SK-N-SH (cell line): ENCODE measurements at regions of chr3 and their contacts with region 1.

Region 1: DNA sequence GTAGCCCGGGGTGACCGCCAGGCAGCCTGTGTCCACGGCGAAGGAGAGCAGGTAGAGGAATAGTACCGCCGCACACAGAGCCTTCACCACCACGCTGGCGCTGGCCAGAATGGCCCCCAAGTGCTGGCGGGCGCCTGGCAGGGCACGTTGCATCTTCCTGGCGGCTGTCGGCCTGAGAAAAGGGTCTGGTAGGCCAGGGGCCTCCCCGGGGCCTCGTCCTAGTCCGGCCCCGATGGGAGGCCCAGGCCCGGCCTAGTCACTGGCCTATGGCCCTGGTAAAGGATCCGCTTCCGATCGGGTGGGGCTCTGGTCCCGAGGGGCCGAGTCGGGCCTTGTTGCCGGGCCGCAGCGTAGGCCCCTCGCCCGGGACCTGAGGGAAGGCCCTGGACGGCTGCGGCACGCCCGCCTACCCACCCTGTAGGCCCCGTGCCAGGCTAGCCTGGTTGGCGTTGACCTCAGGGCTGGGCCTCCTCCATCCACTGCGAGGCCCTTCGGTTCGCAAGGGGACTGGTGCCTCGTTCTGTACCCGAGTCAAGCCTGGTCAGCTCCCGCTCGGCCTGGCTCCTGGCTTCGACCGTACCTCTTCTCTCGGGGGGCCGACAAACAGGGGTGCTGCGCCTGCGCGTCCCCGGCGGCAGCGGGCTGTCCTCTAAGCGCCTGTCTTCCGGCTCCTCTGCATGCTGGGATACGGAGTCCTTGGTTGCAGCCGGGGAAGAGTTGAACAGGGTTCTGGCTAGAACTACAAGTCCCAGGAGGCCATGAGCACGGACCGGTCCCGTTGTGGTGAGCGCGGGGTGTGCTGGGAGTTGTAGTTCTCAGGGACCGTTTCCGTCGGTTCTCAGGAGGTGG is at the start of gene TMEM115:
- DNase-seq: peak; percentile 98
- H3K4me3 ChIP-seq: peak within 1 kb of the TSS; percentile 77 to 95
- H3K27ac ChIP-seq: peak within 1 kb of the TSS; percentile 60 to 84; a peak in 3 of 4 replicates
- H3K4me1 ChIP-seq: peaks cover 8 to 49% of the 10 kb centered on the region in 2 experiments; a peak in 2 of 4 replicates
- H3K27me3 ChIP-seq: no peaks in the 10 kb centered on the region
- CTCF ChIP-seq: no peak
- EP300 ChIP-seq: no peak; a peak in 1 of 4 replicates
- RAD21 ChIP-seq: no peak
- polyA plus RNA-seq, gene TMEM115: 47.8 and 49.2 TPM in 2 replicates

Region 2: DNA sequence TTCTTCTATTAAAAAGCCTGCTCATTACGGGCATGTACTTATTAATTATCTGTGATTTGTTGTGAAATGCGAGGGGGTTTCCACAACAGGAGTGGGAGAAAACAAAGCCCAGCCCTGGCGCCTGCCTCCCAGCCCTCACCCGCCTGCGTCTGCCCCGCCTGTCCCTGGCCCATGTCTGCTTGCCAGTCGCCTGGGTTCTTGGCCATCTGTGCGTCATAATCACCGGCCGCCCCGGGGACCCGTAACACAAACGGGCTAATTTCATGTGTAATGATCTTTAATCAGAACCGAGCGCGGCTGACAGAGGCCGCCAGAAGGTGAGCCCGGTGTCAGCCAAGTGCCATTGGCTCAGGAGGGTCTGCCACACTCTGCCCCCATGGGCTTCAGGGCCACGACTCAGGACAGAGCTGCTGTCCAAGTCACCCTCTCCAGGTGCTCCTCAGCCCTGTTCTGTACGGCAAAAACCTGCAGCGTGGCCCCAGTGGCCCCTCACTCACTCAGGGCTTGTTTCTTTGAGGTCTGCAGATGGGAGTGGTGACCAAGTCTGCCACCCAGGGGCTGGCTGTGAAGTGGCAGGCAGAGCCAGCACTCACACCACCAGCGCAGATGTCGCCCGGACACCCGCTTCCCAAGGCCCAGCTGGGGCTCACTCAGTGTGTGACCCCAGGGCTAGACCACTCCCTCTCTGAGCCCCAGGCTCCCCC is 29.0 kb after region 1 on chr3:
- CTCF ChIA-PET with region 1: interaction called, 33 read pairs
- POLR2A ChIA-PET with region 1: interaction called, 9 read pairs
- DNase-seq: peak; percentile 89
- H3K4me3 ChIP-seq: no peak overlapping the region
- H3K27ac ChIP-seq: peak overlapping the region in 1 of 2 experiments; percentile 100; a peak in 2 of 4 replicates
- H3K4me1 ChIP-seq: peaks cover 0 to 99% of the 10 kb centered on the region in 2 experiments; a peak in 2 of 4 replicates
- H3K27me3 ChIP-seq: no peaks in the 10 kb centered on the region
- CTCF ChIP-seq: peak; percentile 46
- EP300 ChIP-seq: peak in 1 of 2 experiments; percentile 86; a peak in 1 of 4 replicates
- RAD21 ChIP-seq: peak; percentile 73